ENCODE measurements at regions of chr7 and their contacts with region 1.

Region 1: GRCh38 chr7:26200444-26201246 is at the start of gene HNRNPA2B1:
- DNase-seq: peak; percentile 98
- H3K4me3 Mint-ChIP-seq: peak within 1 kb of the TSS; percentile 98
- H3K27ac Mint-ChIP-seq: peak within 1 kb of the TSS; percentile 99
- H3K4me1 Mint-ChIP-seq: peaks cover 37% of the 10 kb centered on the region
- H3K27me3 Mint-ChIP-seq: no peaks in the 10 kb centered on the region
- CTCF ChIP-seq: no peak
- total RNA-seq, gene HNRNPA2B1: 592 and 646 TPM in 2 replicates

Region 2: DNA sequence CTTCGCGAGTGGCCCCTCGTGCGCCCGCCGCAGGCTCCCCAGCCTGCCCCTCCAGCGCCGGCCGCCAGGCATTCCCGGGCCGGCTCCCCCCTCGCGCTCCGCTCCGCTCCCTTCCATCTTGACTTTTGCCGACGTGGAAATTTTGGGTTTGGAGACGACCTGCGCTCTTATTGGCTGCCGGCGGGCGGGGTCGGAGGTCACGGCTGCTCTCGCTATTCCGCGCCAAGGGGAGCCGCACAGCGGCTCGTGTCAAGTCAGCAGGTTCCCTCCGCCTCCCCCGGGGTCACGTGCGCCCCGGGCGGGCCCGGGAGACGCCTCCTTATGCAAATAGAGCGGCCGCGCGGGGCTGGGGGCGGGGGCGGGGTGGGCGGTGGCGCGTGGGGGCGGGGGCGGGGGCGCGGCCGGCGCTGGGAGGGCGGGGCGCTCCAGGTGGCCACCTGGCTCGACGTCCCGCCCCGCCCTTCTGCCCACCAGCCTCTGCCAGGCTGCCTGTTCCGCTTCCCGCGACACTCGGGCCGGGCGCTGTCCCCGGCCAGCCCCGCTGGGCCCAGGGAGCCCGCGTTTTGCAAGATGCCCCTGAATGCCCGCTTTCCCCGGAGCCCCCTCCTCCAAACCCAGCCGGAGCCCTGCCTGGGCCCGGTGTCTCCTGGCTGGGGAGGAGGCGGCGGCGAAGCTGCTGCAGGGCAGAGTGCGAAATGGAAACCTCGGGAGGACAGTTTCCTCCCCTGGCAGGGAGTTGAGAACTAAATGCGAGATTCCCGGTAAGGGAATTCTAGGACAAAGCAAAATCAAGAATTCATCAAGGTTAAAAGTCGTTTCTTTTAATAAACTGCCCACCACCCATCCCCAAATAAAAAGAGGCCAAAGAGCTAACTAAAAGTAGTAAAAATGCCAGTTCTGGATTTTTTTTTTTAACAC is 249.4 kb before region 1 on chr7:
- CTCF ChIA-PET with region 1: interaction called, 5 read pairs
- POLR2A ChIA-PET with region 1: interaction called, 5 read pairs
- intact Hi-C with region 1: loop called (anchors 5 kb)
- DNase-seq: peak; percentile 90
- H3K4me3 Mint-ChIP-seq: peak overlapping the region; percentile 85
- H3K27ac Mint-ChIP-seq: peak overlapping the region; percentile 86
- H3K4me1 Mint-ChIP-seq: peaks cover 10% of the 10 kb centered on the region
- H3K27me3 Mint-ChIP-seq: peaks cover 10% of the 10 kb centered on the region
- CTCF ChIP-seq: no peak

Region 3: DNA sequence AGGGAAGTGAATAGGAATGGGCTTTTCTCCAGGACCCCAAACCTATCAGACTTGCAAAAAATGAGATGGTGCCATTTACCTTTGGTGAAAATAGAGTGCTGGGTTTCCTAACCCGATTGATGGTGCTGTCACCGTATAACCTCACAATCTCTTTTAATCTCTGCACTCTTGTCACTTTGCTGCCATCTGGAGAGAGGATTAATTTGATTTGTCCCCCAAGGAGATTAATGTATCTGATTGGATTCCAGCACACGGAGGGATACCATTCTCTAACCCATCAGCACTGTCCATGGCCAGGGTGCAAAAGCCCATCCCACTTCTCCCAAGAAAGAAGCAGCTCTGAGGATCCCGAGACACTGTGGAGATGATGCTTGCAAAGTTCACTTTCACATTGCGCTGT is 135.0 kb before region 1 on chr7:
- CTCF ChIA-PET with region 1: no interaction called
- POLR2A ChIA-PET with region 1: no interaction called
- intact Hi-C with region 1: no loop called
- DNase-seq: no peak
- H3K4me3 Mint-ChIP-seq: no peak overlapping the region
- H3K27ac Mint-ChIP-seq: no peak overlapping the region
- H3K4me1 Mint-ChIP-seq: no peaks in the 10 kb centered on the region
- H3K27me3 Mint-ChIP-seq: no peaks in the 10 kb centered on the region
- CTCF ChIP-seq: no peak

Region 4: GRCh38 chr7:26078437-26079336 is 122.0 kb before region 1 on chr7:
- CTCF ChIA-PET with region 1: interaction called, 12 read pairs
- POLR2A ChIA-PET with region 1: interaction called, 268 read pairs
- intact Hi-C with region 1: no loop called
- DNase-seq: peak; percentile 39
- H3K4me3 Mint-ChIP-seq: no peak overlapping the region
- H3K27ac Mint-ChIP-seq: no peak overlapping the region
- H3K4me1 Mint-ChIP-seq: no peaks in the 10 kb centered on the region
- H3K27me3 Mint-ChIP-seq: no peaks in the 10 kb centered on the region
- CTCF ChIP-seq: peak; percentile 20

Region 5: GRCh38 chr7:26187380-26188205 is 13.1 kb before region 1 on chr7:
- CTCF ChIA-PET with region 1: interaction called, 15 read pairs
- POLR2A ChIA-PET with region 1: interaction called, 202 read pairs
- intact Hi-C with region 1: no loop called
- DNase-seq: no peak
- H3K4me3 Mint-ChIP-seq: no peak overlapping the region
- H3K27ac Mint-ChIP-seq: no peak overlapping the region
- H3K4me1 Mint-ChIP-seq: no peaks in the 10 kb centered on the region
- H3K27me3 Mint-ChIP-seq: no peaks in the 10 kb centered on the region
- CTCF ChIP-seq: no peak

Region 6: DNA sequence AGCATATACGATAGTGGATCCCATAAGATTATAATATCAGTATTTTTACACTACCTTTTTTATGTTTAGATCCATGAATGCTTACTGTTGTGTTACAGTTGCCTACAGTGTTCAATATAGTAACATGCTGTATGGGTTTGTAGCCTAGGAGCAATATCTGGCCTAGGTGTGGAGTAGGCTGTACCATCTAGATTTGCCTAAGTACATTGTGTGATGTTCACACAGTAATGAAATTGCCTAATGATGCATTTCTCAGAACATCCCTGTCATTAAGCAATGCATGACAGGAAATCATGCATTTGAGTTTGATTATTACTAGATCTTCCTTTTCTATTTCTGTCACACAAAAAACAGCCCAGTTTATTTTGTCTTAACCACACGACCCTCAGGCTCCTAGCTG is 15.4 kb after region 1 on chr7:
- CTCF ChIA-PET with region 1: interaction called, 4 read pairs
- POLR2A ChIA-PET with region 1: interaction called, 13 read pairs
- intact Hi-C with region 1: no loop called
- DNase-seq: no peak
- H3K4me3 Mint-ChIP-seq: no peak overlapping the region
- H3K27ac Mint-ChIP-seq: peak overlapping the region; percentile 70
- H3K4me1 Mint-ChIP-seq: peaks cover 7% of the 10 kb centered on the region
- H3K27me3 Mint-ChIP-seq: no peaks in the 10 kb centered on the region
- CTCF ChIP-seq: no peak

Region 7: DNA sequence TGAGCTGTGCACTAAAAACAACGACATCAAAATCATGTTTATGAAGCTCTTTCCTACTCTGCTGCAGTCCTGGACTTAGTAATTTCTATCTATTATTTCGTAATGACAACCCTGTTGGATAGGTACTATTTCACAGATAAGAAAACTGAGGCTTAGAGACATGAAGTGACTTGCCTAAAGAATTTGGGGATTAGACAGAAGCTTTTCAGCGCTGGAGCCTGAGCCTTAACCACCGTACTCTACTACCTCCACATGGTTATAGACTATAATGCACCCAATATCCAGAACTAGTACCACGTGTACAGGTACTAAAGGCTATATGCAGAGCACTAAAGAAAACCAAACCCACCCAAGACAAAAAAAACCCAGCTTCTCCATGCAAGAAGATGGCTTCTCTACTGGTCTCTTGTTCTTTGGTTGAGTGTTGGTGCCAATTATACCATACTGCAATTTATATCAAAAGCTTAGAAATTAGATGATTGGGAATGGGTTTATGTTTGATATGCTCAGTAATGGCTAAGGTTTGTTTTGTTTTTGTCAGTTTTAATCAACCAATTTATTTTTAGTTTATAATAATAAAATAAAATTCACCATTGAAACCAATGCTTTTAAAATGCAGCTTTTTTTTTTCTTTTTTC is 84.5 kb after region 1 on chr7:
- CTCF ChIA-PET with region 1: interaction called, 11 read pairs
- POLR2A ChIA-PET with region 1: interaction called, 13 read pairs
- intact Hi-C with region 1: loop called (anchors 2 kb)
- DNase-seq: peak; percentile 81
- H3K4me3 Mint-ChIP-seq: no peak overlapping the region
- H3K27ac Mint-ChIP-seq: no peak overlapping the region
- H3K4me1 Mint-ChIP-seq: no peaks in the 10 kb centered on the region
- H3K27me3 Mint-ChIP-seq: no peaks in the 10 kb centered on the region
- CTCF ChIP-seq: peak; percentile 39

Region 8: GRCh38 chr7:26346611-26347203 is 146.1 kb after region 1 on chr7:
- CTCF ChIA-PET with region 1: interaction called, 3 read pairs
- POLR2A ChIA-PET with region 1: interaction called, 5 read pairs
- intact Hi-C with region 1: loop called (anchors 5 kb)
- DNase-seq: peak; percentile 80
- H3K4me3 Mint-ChIP-seq: no peak overlapping the region
- H3K27ac Mint-ChIP-seq: no peak overlapping the region
- H3K4me1 Mint-ChIP-seq: peaks cover 20% of the 10 kb centered on the region
- H3K27me3 Mint-ChIP-seq: no peaks in the 10 kb centered on the region
- CTCF ChIP-seq: no peak